Dorsolateral prefrontal cortex (tissue), 120 donors: ENCODE measurements at regions of chr18 and their contacts with region 1.

Region 1: GRCh38 chr18:57881818-57882413 is 78.8 kb upstream of the ATP8B1 start:
- DNase-seq: peak; percentile 37 to 79 (median 72)
- H3K4me3 ChIP-seq: peak overlapping the region in 4 of 59 donors; percentile 0 to 29 (median 14)
- H3K27ac ChIP-seq: peak overlapping the region in 2 of 59 donors; percentile 8 to 48
- H3K27me3 ChIP-seq: no peaks in the 10 kb centered on the region
- CTCF ChIP-seq: peak; percentile 77 to 99 (median 92)

Region 2: DNA sequence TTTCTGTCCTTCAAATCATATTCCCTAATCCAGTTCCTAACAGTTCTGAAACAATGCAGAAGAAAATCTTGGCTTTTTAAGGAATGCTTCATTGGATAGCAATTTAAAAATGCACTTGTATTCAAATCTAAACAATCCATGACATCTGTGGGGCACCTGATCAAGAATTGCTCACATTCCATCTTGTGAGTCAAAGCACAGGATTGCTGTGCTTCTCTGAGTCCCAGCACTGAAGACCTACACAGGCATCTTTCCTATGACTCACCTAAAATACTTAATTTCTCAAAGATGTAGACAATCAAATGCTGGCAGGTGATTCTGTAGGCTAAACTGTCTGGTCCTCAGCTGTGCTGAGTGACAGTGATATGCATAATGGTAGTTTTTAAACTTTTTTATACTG is 68.7 kb before region 1 on chr18:
- intact Hi-C with region 1: no loop called
- DNase-seq: no peak
- H3K4me3 ChIP-seq: no peak overlapping the region
- H3K27ac ChIP-seq: no peak overlapping the region
- H3K27me3 ChIP-seq: no peaks in the 10 kb centered on the region
- CTCF ChIP-seq: no peak

Region 3: GRCh38 chr18:58024139-58024538 is 142.2 kb after region 1 on chr18:
- intact Hi-C with region 1: loop called in 1 of 2 experiments (anchors 10 kb)
- DNase-seq: no peak
- H3K4me3 ChIP-seq: no peak overlapping the region
- H3K27ac ChIP-seq: no peak overlapping the region
- H3K27me3 ChIP-seq: peaks cover 0 to 71% (median 14%) of the 10 kb centered on the region in 45 donors
- CTCF ChIP-seq: no peak

Region 4: GRCh38 chr18:58128381-58129374 is 246.8 kb after region 1 on chr18:
- intact Hi-C with region 1: loop called (anchors 5 kb)
- DNase-seq: no peak
- H3K4me3 ChIP-seq: no peak overlapping the region
- H3K27ac ChIP-seq: no peak overlapping the region
- H3K27me3 ChIP-seq: peaks cover 0 to 6% (median 0%) of the 10 kb centered on the region in 45 donors
- CTCF ChIP-seq: no peak

Region 5: GRCh38 chr18:58493516-58494253 is 611.8 kb after region 1 on chr18:
- intact Hi-C with region 1: loop called in 1 of 2 experiments (anchors 10 kb)
- DNase-seq: peak; percentile 43 to 85 (median 76)
- H3K4me3 ChIP-seq: peak overlapping the region in 46 of 59 donors; percentile 5 to 61 (median 32)
- H3K27ac ChIP-seq: peak overlapping the region in 39 of 59 donors; percentile 6 to 79 (median 55)
- H3K27me3 ChIP-seq: peaks cover 0 to 4% (median 0%) of the 10 kb centered on the region in 45 donors
- CTCF ChIP-seq: peak; percentile 71 to 96 (median 87)